ENCODE measurements at regions of chr2 and their contacts with region 1.

Region 1: DNA sequence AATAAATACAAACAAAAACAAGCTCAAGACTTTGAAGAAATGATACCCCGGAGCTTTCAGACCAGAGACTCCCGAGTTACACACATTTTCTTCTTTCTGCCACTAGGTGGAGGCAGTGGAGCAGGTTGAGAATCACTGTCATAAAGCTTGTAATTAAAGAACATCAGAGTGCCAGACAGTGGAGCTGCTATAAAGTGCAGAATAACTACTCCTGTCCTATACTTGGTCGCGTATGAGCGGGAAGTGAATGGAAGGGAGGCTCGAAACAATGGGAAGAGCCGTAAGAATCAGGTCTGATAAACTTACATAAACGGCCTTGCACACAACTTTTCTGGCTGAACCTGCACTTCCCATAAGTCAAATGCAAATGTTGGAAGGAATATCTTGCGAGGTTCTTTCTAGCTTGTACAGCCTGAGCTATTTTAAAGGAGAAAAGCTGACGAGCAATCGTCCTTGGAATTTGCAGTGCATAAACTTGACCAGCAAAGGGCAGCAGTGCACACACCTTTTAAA is 189.0 kb downstream of the RPIA start:
- DNase-seq: peak; percentile 39
- ATAC-seq: peak; percentile 77
- H3K4me3 ChIP-seq: no peak overlapping the region
- H3K27ac ChIP-seq: no peak overlapping the region
- H3K4me1 ChIP-seq: no peaks in the 10 kb centered on the region
- H3K27me3 ChIP-seq: no peaks in the 10 kb centered on the region; the same call in 1 of the 2 replicates
- CTCF ChIP-seq: peak; percentile 71
- POLR2A ChIP-seq: no peak
- RAD21 ChIP-seq: peak; percentile 55

Region 2: DNA sequence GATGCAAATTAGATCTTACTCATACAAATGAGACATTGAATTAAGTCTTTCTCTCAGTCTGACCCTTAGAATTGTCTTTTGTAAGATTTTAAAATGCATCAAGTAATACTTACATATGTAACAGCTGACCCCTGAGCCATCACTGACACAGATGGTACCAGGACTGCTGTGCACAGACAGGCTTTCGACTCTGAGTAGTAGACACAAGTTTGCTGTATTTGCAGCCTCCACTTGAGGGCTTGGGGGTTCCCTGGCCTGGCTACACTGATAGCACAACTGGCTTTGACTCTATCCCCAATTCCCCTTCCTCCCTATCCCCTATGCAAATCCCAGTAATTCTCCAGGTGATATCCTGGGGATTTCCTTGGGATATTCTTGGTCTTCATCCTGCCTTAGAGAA is 11.7 kb after region 1 on chr2:
- CTCF ChIA-PET with region 1: interaction called, 13 read pairs
- POLR2A ChIA-PET with region 1: no interaction called
- dilution Hi-C with region 1: no loop called
- in situ Hi-C with region 1: no loop called
- intact Hi-C with region 1: no loop called
- DNase-seq: no peak
- ATAC-seq: no peak
- H3K4me3 ChIP-seq: no peak overlapping the region
- H3K27ac ChIP-seq: no peak overlapping the region
- H3K4me1 ChIP-seq: no peaks in the 10 kb centered on the region
- H3K27me3 ChIP-seq: no peaks in the 10 kb centered on the region
- CTCF ChIP-seq: no peak
- POLR2A ChIP-seq: no peak
- RAD21 ChIP-seq: no peak

Region 3: GRCh38 chr2:89000235-89000634 is 119.7 kb after region 1 on chr2:
- CTCF ChIA-PET with region 1: no interaction called
- POLR2A ChIA-PET with region 1: no interaction called
- dilution Hi-C with region 1: no loop called
- in situ Hi-C with region 1: no loop called
- intact Hi-C with region 1: no loop called
- DNase-seq: no peak
- ATAC-seq: no peak
- H3K4me3 ChIP-seq: no peak overlapping the region
- H3K27ac ChIP-seq: no peak overlapping the region
- H3K4me1 ChIP-seq: no peaks in the 10 kb centered on the region
- H3K27me3 ChIP-seq: no peaks in the 10 kb centered on the region
- CTCF ChIP-seq: no peak
- POLR2A ChIP-seq: no peak
- RAD21 ChIP-seq: no peak